ENCODE measurements at regions of chr10 and their contacts with region 1.

Region 1: DNA sequence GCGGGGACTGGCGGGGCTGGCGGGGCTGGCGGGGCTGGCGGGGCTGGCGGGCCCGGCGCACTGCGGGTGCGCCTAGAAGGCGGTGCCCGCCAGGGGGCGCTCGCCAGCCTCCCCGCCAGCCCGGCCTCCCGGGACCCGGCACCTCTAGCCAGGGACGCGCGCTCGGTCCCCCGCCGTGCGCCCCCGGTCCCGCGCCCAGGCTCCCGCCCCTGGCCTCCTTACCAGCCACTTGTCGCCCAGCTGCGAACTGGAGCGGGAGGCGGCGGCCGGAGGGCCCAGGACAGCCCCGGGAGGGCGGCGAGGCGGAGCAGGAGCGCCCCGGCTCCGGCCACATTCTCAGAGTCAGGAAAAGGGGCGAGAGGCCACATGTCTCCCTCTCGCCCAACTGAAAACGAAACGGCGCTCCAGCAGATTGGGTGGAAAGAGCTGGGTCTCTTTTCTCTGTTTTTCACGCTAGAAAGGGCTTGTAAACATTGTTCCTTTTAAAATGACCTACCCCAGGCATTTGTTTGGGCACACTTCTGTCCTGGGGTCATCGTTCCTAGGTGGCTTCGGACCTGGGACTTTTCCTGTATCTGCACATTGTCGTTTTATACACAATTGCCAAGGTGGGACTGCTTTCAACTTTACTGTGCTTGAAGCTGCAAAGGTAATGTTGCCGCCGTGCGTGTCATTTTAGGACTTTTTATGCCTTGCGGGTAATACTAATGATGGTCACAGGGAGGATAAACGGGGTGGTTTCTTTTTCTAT is 378 bp upstream of the PRKCQ start:
- DNase-seq: peak; percentile 76 to 86 (median 82)
- H3K4me3 ChIP-seq: peak overlapping the region; percentile 83 to 86
- H3K4me3 Mint-ChIP-seq: peak overlapping the region; percentile 90 to 99 (median 94)
- H3K27ac ChIP-seq: peak overlapping the region; percentile 90
- H3K27ac Mint-ChIP-seq: peak overlapping the region; percentile 93 to 99 (median 96)
- H3K4me1 ChIP-seq: peaks cover 63% of the 10 kb centered on the region
- H3K4me1 Mint-ChIP-seq: peaks cover 40 to 82% (median 52%) of the 10 kb centered on the region in 4 donors
- H3K27me3 ChIP-seq: no peaks in the 10 kb centered on the region
- H3K27me3 Mint-ChIP-seq: no peaks in the 10 kb centered on the region

Region 2: GRCh38 chr10:6473901-6474370 is 106.5 kb before region 1 on chr10:
- CTCF ChIA-PET with region 1: interaction called, 15 read pairs
- POLR2A ChIA-PET with region 1: interaction called, 32 read pairs
- intact Hi-C with region 1: loop called (anchors 1 kb)
- DNase-seq: peak; percentile 60 to 74 (median 69)
- H3K4me3 ChIP-seq: peak overlapping the region; percentile 32 to 56
- H3K4me3 Mint-ChIP-seq: peak overlapping the region; percentile 82 to 90 (median 88)
- H3K27ac ChIP-seq: peak overlapping the region; percentile 85
- H3K27ac Mint-ChIP-seq: peak overlapping the region; percentile 93 to 99 (median 95)
- H3K4me1 ChIP-seq: peaks cover 44% of the 10 kb centered on the region
- H3K4me1 Mint-ChIP-seq: peaks cover 43 to 67% (median 56%) of the 10 kb centered on the region in 4 donors
- H3K27me3 ChIP-seq: no peaks in the 10 kb centered on the region
- H3K27me3 Mint-ChIP-seq: no peaks in the 10 kb centered on the region

Region 3: DNA sequence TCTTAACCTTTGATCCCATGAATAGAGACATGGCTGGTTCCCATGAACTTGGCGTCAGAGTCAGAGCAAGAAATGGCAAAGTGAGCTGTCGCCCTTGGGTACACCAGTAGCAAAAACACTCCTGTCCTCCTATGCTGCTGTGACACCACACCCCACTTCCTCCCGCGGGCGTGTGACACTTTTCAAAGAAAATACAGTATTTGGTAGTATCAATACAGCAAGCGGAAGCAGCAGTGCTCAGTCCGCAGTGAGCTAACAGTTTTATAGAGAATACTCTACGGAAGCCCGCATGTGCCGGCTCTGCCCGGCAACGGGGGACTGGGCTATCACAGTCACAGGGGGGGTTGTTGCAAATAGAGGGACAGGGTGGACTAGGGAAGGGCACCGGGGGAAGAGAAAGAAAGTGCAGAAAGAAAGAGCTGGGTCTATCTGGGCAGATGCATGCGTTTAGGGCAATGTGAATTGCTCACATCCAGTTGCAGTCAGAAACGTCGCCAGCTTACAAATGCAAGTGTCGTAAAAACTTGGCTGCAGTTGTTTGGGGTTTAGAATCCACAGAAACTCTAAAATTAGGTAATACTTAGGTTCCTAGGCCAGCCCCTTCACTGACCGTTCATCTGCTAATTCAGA is 50.1 kb before region 1 on chr10:
- CTCF ChIA-PET with region 1: interaction called, 40 read pairs
- POLR2A ChIA-PET with region 1: interaction called, 161 read pairs
- intact Hi-C with region 1: loop called (anchors 1 kb)
- DNase-seq: peak; percentile 80 to 89 (median 86)
- H3K4me3 ChIP-seq: peak overlapping the region; percentile 35 to 36
- H3K4me3 Mint-ChIP-seq: peak overlapping the region; percentile 87 to 98 (median 90)
- H3K27ac ChIP-seq: peak overlapping the region; percentile 70
- H3K27ac Mint-ChIP-seq: peak overlapping the region; percentile 90 to 100 (median 99)
- H3K4me1 ChIP-seq: peaks cover 86% of the 10 kb centered on the region
- H3K4me1 Mint-ChIP-seq: peaks cover 71 to 91% (median 82%) of the 10 kb centered on the region in 4 donors
- H3K27me3 ChIP-seq: no peaks in the 10 kb centered on the region
- H3K27me3 Mint-ChIP-seq: no peaks in the 10 kb centered on the region

Region 4: GRCh38 chr10:6593241-6593671 is 12.8 kb after region 1 on chr10:
- CTCF ChIA-PET with region 1: interaction called, 101 read pairs
- POLR2A ChIA-PET with region 1: interaction called, 355 read pairs
- intact Hi-C with region 1: loop called (anchors 1 kb)
- DNase-seq: peak in 4 of 5 donors; percentile 24 to 68 (median 28)
- H3K4me3 ChIP-seq: no peak overlapping the region
- H3K4me3 Mint-ChIP-seq: peak overlapping the region; percentile 39 to 81 (median 74)
- H3K27ac ChIP-seq: peak overlapping the region; percentile 40
- H3K27ac Mint-ChIP-seq: peak overlapping the region; percentile 88 to 97 (median 94)
- H3K4me1 ChIP-seq: peaks cover 93% of the 10 kb centered on the region
- H3K4me1 Mint-ChIP-seq: peaks cover 63 to 97% (median 77%) of the 10 kb centered on the region in 4 donors
- H3K27me3 ChIP-seq: no peaks in the 10 kb centered on the region
- H3K27me3 Mint-ChIP-seq: no peaks in the 10 kb centered on the region

Region 5: DNA sequence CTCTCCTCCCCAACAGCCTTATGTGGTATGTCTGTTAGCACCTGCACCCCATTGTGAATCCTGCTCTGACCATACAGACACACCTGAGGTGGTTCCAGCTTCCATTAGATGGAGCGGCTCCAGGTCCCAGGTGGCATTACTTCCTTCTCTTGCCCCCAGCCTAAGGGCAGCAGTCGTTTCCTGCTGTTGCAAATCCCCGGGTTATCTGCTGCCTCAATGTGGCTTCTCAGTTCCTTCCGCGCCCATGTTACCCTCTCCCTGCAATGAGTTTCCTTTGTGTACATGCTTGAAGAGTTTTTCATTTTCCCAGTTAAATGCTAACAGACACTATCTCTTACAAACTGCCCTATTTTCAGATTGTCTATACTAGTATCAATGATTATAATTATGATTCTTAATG is 62.4 kb after region 1 on chr10:
- CTCF ChIA-PET with region 1: interaction called, 39 read pairs
- POLR2A ChIA-PET with region 1: interaction called, 38 read pairs
- intact Hi-C with region 1: loop called (anchors 1 kb)
- DNase-seq: no peak
- H3K4me3 ChIP-seq: no peak overlapping the region
- H3K4me3 Mint-ChIP-seq: peak overlapping the region in 5 of 8 donors; percentile 20 to 50 (median 32)
- H3K27ac ChIP-seq: no peak overlapping the region
- H3K27ac Mint-ChIP-seq: peak overlapping the region in 5 of 7 donors; percentile 12 to 59 (median 40)
- H3K4me1 ChIP-seq: peaks cover 27% of the 10 kb centered on the region
- H3K4me1 Mint-ChIP-seq: peaks cover 18 to 36% (median 25%) of the 10 kb centered on the region in 4 donors
- H3K27me3 ChIP-seq: no peaks in the 10 kb centered on the region
- H3K27me3 Mint-ChIP-seq: no peaks in the 10 kb centered on the region

Measured in CD4-positive, alpha-beta memory T cell (primary cell).